ENCODE measurements at regions of chr6 and their contacts with region 1.

Region 1: GRCh38 chr6:34099878-34100277 is 46.0 kb downstream of the GRM4 start:
- DNase-seq: no peak
- H3K4me3 ChIP-seq: no peak overlapping the region
- H3K4me3 Mint-ChIP-seq: peak overlapping the region in 1 of 7 donors; percentile 48
- H3K27ac ChIP-seq: no peak overlapping the region
- H3K27ac Mint-ChIP-seq: no peak overlapping the region
- H3K4me1 ChIP-seq: no peaks in the 10 kb centered on the region
- H3K4me1 Mint-ChIP-seq: no peaks in the 10 kb centered on the region
- H3K27me3 ChIP-seq: no peaks in the 10 kb centered on the region
- H3K27me3 Mint-ChIP-seq: peaks cover 11 to 53% of the 10 kb centered on the region in 2 donors

Region 2: DNA sequence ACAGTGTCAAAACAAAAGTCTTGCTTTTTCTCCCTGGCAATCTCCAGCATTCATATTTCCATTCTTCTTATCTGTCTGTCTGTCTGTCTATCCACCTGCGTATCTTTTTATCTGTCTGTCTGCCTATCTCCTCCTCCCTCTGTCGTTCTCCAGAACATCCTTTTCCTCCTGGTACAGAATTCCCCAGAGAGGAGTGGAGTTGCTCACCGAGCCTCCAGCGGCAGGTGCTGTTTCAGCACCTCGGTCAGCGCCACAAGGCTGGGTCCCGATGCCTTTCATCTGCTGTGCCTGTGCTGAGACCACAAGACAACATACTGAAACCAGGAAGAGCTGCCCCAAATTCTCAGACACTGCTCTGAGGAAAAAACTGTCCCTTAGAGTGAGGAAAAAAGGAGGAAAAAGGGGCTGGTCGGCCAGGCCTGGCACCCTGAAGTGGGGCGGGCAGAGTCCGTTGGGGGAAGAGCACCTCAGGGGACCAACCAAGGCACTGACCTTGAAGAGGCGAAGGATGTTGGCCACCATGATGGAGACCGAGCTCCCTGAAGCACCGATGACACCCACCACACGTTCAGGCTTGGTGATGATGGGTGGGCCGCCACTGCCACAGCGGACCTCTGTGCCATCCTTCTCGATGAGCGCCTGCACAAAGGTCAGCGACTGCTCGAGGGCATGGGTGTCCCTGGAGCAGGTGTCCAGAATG is 32.8 kb after region 1 on chr6:
- CTCF ChIA-PET with region 1: no interaction called
- POLR2A ChIA-PET with region 1: no interaction called
- DNase-seq: peak in 2 of 5 donors; percentile 12 to 31
- H3K4me3 ChIP-seq: no peak overlapping the region
- H3K4me3 Mint-ChIP-seq: no peak overlapping the region
- H3K27ac ChIP-seq: no peak overlapping the region
- H3K27ac Mint-ChIP-seq: no peak overlapping the region
- H3K4me1 ChIP-seq: no peaks in the 10 kb centered on the region
- H3K4me1 Mint-ChIP-seq: peaks cover 0 to 2% (median 0%) of the 10 kb centered on the region in 3 donors
- H3K27me3 ChIP-seq: peaks cover 4% of the 10 kb centered on the region
- H3K27me3 Mint-ChIP-seq: peaks cover 38 to 66% of the 10 kb centered on the region in 2 donors

Region 3: GRCh38 chr6:34362909-34363680 is 263.2 kb after region 1 on chr6:
- CTCF ChIA-PET with region 1: no interaction called
- POLR2A ChIA-PET with region 1: interaction called, 16 read pairs
- DNase-seq: no peak
- H3K4me3 ChIP-seq: no peak overlapping the region
- H3K4me3 Mint-ChIP-seq: no peak overlapping the region
- H3K27ac ChIP-seq: no peak overlapping the region
- H3K27ac Mint-ChIP-seq: peak overlapping the region in 5 of 8 donors; percentile 10 to 62 (median 52)
- H3K4me1 ChIP-seq: peaks cover 8% of the 10 kb centered on the region
- H3K4me1 Mint-ChIP-seq: peaks cover 39 to 61% (median 56%) of the 10 kb centered on the region in 3 donors
- H3K27me3 ChIP-seq: no peaks in the 10 kb centered on the region
- H3K27me3 Mint-ChIP-seq: no peaks in the 10 kb centered on the region

Measured in CD8-positive, alpha-beta memory T cell (primary cell).